Activated CD4-positive, alpha-beta T cell treated with anti-CD3 and anti-CD28 coated beads, Interleukin-2, amount 10 ng/mL, durations not matched to agents 7 days and 5 days (primary cell): ENCODE measurements at regions of chr3 and their contacts with region 1.

Region 1: DNA sequence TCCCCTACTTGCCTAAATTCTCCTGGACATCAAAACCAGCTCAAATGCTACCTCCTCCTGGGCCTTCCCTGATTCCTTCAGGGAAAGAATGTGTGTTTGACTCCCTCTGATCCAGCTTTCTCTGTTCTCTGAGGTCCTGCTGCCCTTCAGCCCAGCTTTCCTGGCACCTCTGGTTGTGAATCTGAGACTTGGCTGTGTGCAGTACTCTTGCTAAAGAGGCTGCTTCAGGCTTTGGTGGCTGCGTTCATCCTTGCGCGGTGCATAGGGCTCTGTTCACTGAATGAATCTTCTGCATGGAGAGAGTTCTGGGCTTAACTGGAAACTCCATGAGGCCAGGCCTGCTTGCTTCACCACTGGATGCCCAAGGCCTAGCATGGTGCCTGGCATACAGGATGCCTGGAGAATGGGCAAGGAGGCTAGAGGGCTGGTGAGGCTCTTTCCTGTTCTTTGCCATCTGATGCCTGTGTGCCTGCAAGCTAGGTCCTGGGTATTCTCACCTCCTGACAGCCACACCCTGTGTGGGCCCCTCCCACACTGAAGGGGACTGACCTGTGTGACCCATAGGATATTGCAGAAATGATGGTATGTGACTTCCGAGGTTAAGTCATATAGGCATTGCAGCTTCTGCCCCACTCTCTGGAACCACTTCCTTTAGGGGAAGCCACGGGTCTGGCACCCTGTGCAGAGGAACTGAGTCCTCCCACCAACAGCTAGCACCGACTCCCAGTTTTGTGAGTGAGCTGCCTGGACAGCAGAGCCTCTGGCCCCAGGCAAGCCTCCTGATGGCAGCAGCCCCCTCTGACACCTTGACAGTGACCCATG is 24.8 kb upstream of the SLC6A6 start:
- DNase-seq: peak; percentile 45
- H3K4me3 Mint-ChIP-seq: no peak overlapping the region
- H3K27ac Mint-ChIP-seq: peak overlapping the region; percentile 80
- H3K4me1 Mint-ChIP-seq: peaks cover 29% of the 10 kb centered on the region
- H3K27me3 Mint-ChIP-seq: peaks cover 2% of the 10 kb centered on the region

Region 2: DNA sequence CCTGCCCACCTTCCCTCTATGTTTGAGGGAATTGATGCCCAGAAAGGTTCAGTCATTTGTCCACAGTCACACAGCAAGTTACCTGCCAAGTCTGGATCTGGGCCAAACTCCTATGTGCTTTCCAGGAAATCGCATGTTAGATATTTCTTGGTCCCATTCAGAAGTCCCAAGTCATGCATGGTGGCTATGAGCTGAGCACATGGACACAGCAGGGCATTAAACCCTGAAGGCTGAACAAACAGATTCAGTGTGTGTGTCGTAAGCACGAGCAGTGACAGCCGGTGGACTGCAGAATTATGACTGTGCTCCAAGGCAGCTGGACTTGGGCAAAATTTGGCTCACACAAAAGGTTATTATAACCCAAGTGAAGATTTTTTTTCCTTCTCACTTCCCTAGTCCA is 13.5 kb after region 1 on chr3:
- CTCF ChIA-PET with region 1: interaction called, 10 read pairs
- POLR2A ChIA-PET with region 1: no interaction called
- DNase-seq: no peak
- H3K4me3 Mint-ChIP-seq: no peak overlapping the region
- H3K27ac Mint-ChIP-seq: no peak overlapping the region
- H3K4me1 Mint-ChIP-seq: peaks cover under 1% of the 10 kb centered on the region
- H3K27me3 Mint-ChIP-seq: peaks cover 16% of the 10 kb centered on the region